Breast epithelium (tissue), 4 donors: ENCODE measurements at regions of chr2 and their contacts with region 1.

Region 1: GRCh38 chr2:205700331-205701132 is 18.2 kb downstream of the NRP2 start:
- DNase-seq: no peak
- H3K4me3 ChIP-seq: no peak overlapping the region
- H3K27ac ChIP-seq: peak overlapping the region in 1 of 2 donors; percentile 28
- H3K4me1 ChIP-seq: no peaks in the 10 kb centered on the region
- H3K27me3 ChIP-seq: no peaks in the 10 kb centered on the region
- CTCF ChIP-seq: no peak
- POLR2A ChIP-seq: no peak

Region 2: DNA sequence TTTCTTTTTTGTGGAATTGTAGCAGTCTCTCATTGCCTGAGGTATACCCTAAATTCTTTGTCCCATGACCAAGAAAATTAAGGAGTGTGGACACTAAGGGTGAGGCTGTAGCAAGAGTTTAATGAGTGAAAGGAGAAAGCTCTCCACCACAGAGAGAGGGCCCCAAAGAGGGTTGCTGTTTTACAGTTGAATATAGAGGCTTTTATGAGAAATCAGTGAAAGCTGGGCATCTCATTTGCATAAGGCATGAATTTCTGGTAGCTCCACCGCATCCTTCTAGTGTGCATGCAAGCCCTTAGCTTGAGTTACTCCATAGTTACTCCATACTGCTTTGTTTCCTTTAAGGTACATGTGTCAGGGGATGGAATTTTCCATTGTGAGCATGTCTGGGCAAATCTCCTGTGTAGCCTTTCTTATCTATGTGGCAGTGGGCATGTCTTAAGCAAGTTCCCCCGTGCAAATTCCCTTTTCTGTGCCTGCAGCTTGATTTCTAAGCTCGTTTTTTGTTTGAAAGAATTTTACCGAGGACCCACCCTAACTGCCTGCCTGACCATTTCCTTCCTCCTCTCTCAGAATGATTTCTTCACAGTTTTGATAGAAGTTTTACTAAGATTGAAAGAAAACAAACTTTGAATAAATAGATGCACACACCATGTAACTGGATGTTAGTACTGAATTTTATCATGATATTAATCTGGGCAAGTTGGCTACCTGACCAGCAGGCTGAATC is 936.4 kb before region 1 on chr2:
- intact Hi-C with region 1: loop called (anchors 5 kb)
- DNase-seq: no peak
- H3K4me3 ChIP-seq: no peak overlapping the region
- H3K27ac ChIP-seq: no peak overlapping the region
- H3K4me1 ChIP-seq: no peaks in the 10 kb centered on the region
- H3K27me3 ChIP-seq: no peaks in the 10 kb centered on the region
- CTCF ChIP-seq: no peak
- POLR2A ChIP-seq: no peak

Region 3: DNA sequence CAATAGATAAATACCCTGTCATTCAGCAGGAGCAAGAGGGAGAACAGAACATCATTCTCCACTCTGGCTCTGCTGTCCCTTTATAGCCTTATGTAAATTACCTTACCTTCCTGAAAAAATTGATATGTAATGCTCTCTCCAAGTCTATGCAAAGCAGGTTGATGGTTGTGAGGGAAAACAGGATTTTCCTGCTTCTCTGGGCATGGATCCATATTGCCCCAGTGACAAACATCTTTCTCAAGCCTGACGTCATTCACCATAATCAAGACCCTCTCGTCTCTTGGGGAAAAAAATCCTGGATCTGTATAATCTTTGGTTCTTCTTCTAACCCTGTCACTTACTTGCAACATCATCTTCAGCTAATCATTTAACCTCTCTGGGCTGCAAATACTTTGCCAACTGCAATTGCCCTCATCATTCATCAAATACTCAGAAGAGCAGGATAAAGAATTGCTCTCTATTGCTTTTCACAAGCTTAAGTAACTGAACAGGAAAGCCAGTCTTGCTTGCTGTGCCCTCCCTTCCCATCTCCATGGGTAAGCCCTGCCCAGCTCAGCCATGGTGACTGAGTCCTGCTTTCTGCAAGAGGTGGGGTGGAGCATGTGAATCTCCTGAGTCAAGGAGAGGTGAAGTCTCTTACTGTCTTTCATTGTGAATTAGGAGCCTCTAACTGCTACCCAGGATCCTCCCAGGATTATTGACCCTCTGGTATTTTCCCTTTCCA is 1588.9 kb after region 1 on chr2:
- intact Hi-C with region 1: loop called (anchors 10 kb)
- DNase-seq: no peak
- H3K4me3 ChIP-seq: no peak overlapping the region
- H3K27ac ChIP-seq: no peak overlapping the region
- H3K4me1 ChIP-seq: no peaks in the 10 kb centered on the region
- H3K27me3 ChIP-seq: no peaks in the 10 kb centered on the region
- CTCF ChIP-seq: no peak
- POLR2A ChIP-seq: no peak